Mammary epithelial cell (primary cell): ENCODE measurements at regions of chr11 and their contacts with region 1.

Region 1: DNA sequence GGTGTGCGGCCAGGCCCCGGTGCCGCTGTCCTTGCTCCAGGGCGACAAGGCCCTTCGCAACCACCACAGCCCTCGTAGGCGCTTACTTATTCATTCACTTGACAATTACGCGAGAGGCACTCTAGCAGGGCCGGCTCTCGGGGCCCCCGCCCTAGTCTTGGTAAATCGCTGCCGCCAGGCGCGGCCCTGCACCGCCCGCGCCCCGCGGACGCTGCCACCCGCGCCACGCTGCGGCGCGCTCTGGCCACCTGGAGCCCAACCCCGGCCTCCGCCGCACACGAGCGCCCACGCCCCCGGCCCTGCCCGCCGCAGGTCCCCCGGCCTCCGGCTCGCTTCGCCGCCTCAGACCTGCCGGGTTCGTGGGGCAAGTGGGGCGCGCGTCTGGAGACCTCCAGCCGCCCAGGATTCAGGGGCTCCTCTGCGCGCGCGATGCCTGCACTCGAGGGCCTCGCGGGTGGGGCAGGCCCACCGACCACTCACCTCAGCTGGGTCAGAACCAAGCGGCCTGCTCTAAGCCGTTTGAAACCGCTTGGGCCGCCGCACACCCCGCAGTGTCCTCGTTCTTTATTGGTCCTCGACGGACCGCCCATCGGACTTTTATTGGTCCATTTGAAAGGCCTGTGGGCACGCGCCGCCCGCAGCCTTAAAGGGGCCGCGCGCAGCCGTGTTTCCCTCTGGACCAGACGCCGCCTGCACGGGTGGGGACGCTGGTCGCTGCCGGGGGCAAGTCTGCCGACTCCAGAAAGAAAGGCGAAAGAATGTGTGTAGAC is at the start of gene CKAP5:
- DNase-seq: peak; percentile 86
- H3K4me3 ChIP-seq: peak within 1 kb of the TSS; percentile 77 to 90 (median 87)
- H3K27ac ChIP-seq: peak within 1 kb of the TSS; percentile 56
- H3K4me1 ChIP-seq: peaks cover 4% of the 10 kb centered on the region
- H3K27me3 ChIP-seq: no peaks in the 10 kb centered on the region
- CTCF ChIP-seq: no peak
- total RNA-seq, gene CKAP5: 60.3 to 128 TPM

Region 2: GRCh38 chr11:46826310-46827044 is 19.4 kb before region 1 on chr11:
- CTCF ChIA-PET with region 1: no interaction called
- dilution Hi-C with region 1: no loop called
- in situ Hi-C with region 1: no loop called
- intact Hi-C with region 1: loop called (anchors 2 kb)
- DNase-seq: peak; percentile 77
- H3K4me3 ChIP-seq: peak overlapping the region; percentile 41 to 62 (median 57)
- H3K27ac ChIP-seq: peak overlapping the region; percentile 19
- H3K4me1 ChIP-seq: peaks cover 29% of the 10 kb centered on the region
- H3K27me3 ChIP-seq: no peaks in the 10 kb centered on the region
- CTCF ChIP-seq: peak in 1 of 2 donors; percentile 28

Region 3: GRCh38 chr11:47317064-47317828 is 471.3 kb after region 1 on chr11:
- CTCF ChIA-PET with region 1: no interaction called
- dilution Hi-C with region 1: no loop called
- in situ Hi-C with region 1: no loop called
- intact Hi-C with region 1: no loop called
- DNase-seq: no peak
- H3K4me3 ChIP-seq: no peak overlapping the region
- H3K27ac ChIP-seq: no peak overlapping the region
- H3K4me1 ChIP-seq: no peaks in the 10 kb centered on the region
- H3K27me3 ChIP-seq: no peaks in the 10 kb centered on the region
- CTCF ChIP-seq: no peak